ENCODE measurements at regions of chr18 and their contacts with region 1.

Region 1: GRCh38 chr18:12934454-12935071 is 13.2 kb upstream of the SEH1L start:
- DNase-seq: peak; percentile 84 to 91 (median 87)
- H3K4me3 ChIP-seq: peak overlapping the region in 1 of 7 experiments; percentile 12
- H3K27ac ChIP-seq: no peak overlapping the region
- H3K4me1 ChIP-seq: peaks cover 0 to 3% (median 0%) of the 10 kb centered on the region in 4 experiments
- H3K27me3 ChIP-seq: no peaks in the 10 kb centered on the region

Region 2: DNA sequence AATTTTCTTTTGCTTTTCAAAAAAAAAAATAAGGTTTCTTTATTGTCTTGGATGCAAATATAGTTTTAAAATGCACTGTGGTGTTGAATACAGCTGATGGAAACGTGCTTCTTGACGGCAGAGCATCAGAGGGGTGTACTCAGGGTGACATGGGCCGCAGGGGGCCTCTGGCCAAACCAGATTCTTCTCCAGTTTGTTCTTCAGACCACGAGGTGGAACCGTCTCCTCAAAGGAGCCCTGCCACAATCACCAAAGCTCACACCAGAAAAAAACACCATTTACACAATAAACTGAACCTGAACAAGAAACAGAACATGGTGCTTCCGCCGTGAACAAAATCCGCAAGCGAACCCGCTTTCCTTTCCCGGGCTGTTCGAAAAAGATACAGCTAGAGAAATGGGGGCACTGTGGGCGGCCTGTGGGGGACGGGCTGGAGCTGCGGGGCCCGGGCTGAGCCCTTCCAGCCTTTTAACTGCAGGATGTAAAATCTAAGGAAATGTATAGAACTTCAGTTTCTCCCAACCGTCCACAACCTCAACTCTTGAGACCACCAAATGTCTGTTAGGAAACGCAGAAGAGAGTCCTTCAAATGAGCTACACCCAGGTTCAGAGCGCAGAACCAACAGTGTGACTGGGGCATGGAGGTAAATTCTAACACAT is 197.2 kb before region 1 on chr18:
- CTCF ChIA-PET with region 1: interaction called, 74 read pairs
- POLR2A ChIA-PET with region 1: no interaction called
- DNase-seq: no peak
- H3K4me3 ChIP-seq: no peak overlapping the region
- H3K27ac ChIP-seq: no peak overlapping the region
- H3K4me1 ChIP-seq: no peaks in the 10 kb centered on the region
- H3K27me3 ChIP-seq: no peaks in the 10 kb centered on the region

Region 3: GRCh38 chr18:12750076-12750714 is 184.4 kb before region 1 on chr18:
- CTCF ChIA-PET with region 1: interaction called, 74 read pairs
- POLR2A ChIA-PET with region 1: no interaction called
- DNase-seq: peak in 2 of 3 donors; percentile 15 to 48
- H3K4me3 ChIP-seq: no peak overlapping the region
- H3K27ac ChIP-seq: no peak overlapping the region
- H3K4me1 ChIP-seq: no peaks in the 10 kb centered on the region
- H3K27me3 ChIP-seq: no peaks in the 10 kb centered on the region

Region 4: GRCh38 chr18:12872408-12872807 is 62.2 kb before region 1 on chr18:
- CTCF ChIA-PET with region 1: no interaction called
- POLR2A ChIA-PET with region 1: no interaction called
- DNase-seq: no peak
- H3K4me3 ChIP-seq: no peak overlapping the region
- H3K27ac ChIP-seq: no peak overlapping the region
- H3K4me1 ChIP-seq: no peaks in the 10 kb centered on the region
- H3K27me3 ChIP-seq: no peaks in the 10 kb centered on the region

Region 5: GRCh38 chr18:12890506-12890905 is 44.1 kb before region 1 on chr18:
- CTCF ChIA-PET with region 1: interaction called, 28 read pairs
- POLR2A ChIA-PET with region 1: no interaction called
- DNase-seq: peak in 1 of 3 donors; percentile 20
- H3K4me3 ChIP-seq: no peak overlapping the region
- H3K27ac ChIP-seq: no peak overlapping the region
- H3K4me1 ChIP-seq: no peaks in the 10 kb centered on the region
- H3K27me3 ChIP-seq: peaks cover 0 to 6% (median 0%) of the 10 kb centered on the region in 5 experiments

Region 6: GRCh38 chr18:12921178-12921577 is 13.4 kb before region 1 on chr18:
- CTCF ChIA-PET with region 1: interaction called, 22 read pairs
- POLR2A ChIA-PET with region 1: no interaction called
- DNase-seq: peak in 2 of 3 donors; percentile 10 to 27
- H3K4me3 ChIP-seq: no peak overlapping the region
- H3K27ac ChIP-seq: no peak overlapping the region
- H3K4me1 ChIP-seq: no peaks in the 10 kb centered on the region
- H3K27me3 ChIP-seq: no peaks in the 10 kb centered on the region